ENCODE measurements at regions of chr2 and their contacts with region 1.

Region 1: DNA sequence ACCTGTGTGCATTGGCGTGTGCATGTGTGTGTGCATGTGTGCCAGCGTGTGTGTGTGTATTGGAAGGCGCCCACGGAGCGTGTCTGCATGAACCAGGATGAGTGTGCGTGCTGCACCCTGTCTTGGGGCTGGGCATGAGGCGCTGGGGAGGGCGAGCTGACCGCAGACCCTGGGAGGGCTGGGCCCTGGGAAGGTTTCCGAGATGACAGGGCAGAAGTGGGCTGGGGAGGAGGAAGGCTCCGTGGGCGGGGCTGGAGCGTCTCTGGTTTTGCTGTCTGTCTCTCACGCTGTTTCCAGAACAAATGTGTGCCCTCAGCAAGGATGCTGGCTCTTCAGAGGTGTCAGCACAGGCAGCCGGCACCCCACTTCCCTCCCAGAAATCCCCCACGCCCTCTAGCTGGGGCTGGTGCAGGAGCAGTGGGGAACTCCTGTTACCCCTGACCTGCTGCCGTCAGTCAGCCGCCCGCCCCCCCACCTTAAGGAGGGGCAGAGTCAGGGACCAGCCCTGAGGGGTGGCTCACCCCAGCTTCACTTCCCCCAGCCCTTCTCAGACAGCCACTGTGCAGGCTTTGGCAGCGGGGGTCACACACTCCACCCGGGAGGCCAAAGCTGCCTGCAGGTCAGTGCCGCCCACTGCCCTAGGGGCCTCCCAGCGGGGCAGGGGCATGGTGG is at the start of gene GPR35:
- DNase-seq: peak; percentile 84
- H3K4me3 Mint-ChIP-seq: peak within 1 kb of the TSS; percentile 49
- H3K27ac Mint-ChIP-seq: peak within 1 kb of the TSS; percentile 87
- H3K4me1 Mint-ChIP-seq: peaks cover 59% of the 10 kb centered on the region
- H3K27me3 Mint-ChIP-seq: no peaks in the 10 kb centered on the region
- total RNA-seq, gene GPR35: 5.2 to 5.7 TPM

Region 2: GRCh38 chr2:240560480-240561326 is 64.4 kb before region 1 on chr2:
- CTCF ChIA-PET with region 1: interaction called, 14 read pairs
- POLR2A ChIA-PET with region 1: interaction called, 39 read pairs
- DNase-seq: peak; percentile 100
- H3K4me3 Mint-ChIP-seq: peak overlapping the region; percentile 92
- H3K27ac Mint-ChIP-seq: peak overlapping the region; percentile 87
- H3K4me1 Mint-ChIP-seq: peaks cover 75% of the 10 kb centered on the region
- H3K27me3 Mint-ChIP-seq: no peaks in the 10 kb centered on the region

Region 3: GRCh38 chr2:240566203-240567136 is 58.6 kb before region 1 on chr2:
- CTCF ChIA-PET with region 1: interaction called, 14 read pairs
- POLR2A ChIA-PET with region 1: interaction called, 39 read pairs
- DNase-seq: peak; percentile 97
- H3K4me3 Mint-ChIP-seq: peak overlapping the region; percentile 94
- H3K27ac Mint-ChIP-seq: peak overlapping the region; percentile 97
- H3K4me1 Mint-ChIP-seq: peaks cover 71% of the 10 kb centered on the region
- H3K27me3 Mint-ChIP-seq: no peaks in the 10 kb centered on the region

Region 4: DNA sequence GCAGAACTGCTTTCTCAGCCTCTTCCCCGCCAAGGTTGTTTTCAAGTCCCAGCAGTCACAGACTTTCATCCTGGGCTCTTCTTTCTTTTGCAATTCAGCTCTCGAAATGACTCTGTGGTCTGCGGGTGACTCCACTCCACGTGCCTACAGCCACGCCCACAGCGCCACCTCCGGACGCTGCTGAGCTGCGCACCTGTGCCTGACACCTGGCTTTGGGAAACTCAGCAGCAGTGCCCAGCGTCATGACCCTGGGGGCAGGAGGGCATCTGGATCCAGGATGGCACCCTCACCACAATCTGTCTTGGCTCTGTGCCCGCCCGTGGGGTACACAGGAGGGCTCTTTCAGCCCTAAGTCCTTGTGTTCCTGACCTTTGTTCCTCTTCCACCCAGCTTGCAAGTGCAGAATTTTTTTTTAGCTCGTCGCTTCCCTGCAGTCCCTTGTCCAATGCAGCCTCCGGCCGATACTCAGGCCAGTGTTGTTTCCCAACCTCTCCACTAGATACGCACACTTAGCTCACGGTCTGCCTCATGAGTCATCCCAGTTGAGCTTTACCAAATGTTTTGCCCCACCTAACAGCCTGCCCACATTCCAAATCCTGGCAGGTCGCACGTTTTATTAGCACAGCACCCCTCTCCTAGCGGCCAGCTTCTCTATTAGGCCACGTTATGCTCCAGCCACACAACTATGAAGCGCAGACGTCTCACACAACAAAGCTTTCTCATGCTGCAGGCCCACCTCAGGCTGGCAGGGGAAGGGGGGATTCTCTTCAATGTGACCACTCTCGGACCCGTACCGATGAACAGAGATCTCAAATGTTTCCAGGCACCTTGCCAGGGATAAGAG is 45.1 kb before region 1 on chr2:
- CTCF ChIA-PET with region 1: interaction called, 10 read pairs
- POLR2A ChIA-PET with region 1: interaction called, 50 read pairs
- DNase-seq: peak; percentile 88
- H3K4me3 Mint-ChIP-seq: no peak overlapping the region
- H3K27ac Mint-ChIP-seq: peak overlapping the region; percentile 79
- H3K4me1 Mint-ChIP-seq: peaks cover 51% of the 10 kb centered on the region
- H3K27me3 Mint-ChIP-seq: no peaks in the 10 kb centered on the region

Region 5: DNA sequence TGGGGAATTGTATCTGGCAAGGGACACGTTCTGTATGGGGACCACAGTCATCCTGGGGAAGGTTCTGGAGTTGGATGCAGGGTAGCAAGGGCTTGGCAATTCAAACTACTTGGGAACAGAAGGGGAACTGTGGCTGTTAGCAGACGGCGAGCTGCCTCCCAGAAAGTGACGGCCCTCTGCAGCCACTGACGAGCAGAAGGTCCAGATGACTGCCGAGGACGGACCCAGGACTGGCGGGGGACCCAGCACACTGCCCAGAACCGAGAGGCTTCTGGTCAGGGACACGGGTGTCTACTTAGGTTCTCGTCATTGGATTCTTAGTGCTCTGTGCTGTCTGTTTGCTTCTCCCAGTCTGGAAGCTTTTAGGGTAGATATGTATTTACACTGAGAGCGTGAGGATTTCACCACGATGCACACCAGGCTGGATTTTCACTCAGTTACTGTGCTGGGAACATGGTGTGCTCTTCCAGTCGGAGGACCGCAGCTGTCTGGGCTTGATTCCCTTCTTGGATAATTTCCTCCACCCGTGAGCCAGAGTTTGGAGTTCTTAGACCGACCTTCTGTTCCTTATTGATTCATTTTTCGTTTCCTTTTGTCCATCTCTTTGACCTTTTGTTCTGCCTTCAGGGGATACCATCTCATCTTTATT is 13.6 kb after region 1 on chr2:
- CTCF ChIA-PET with region 1: no interaction called
- POLR2A ChIA-PET with region 1: no interaction called
- DNase-seq: no peak
- H3K4me3 Mint-ChIP-seq: no peak overlapping the region
- H3K27ac Mint-ChIP-seq: no peak overlapping the region
- H3K4me1 Mint-ChIP-seq: no peaks in the 10 kb centered on the region
- H3K27me3 Mint-ChIP-seq: peaks cover 5% of the 10 kb centered on the region

Region 6: GRCh38 chr2:240713071-240713927 is 88.2 kb after region 1 on chr2:
- CTCF ChIA-PET with region 1: no interaction called
- POLR2A ChIA-PET with region 1: no interaction called
- DNase-seq: no peak
- H3K4me3 Mint-ChIP-seq: no peak overlapping the region
- H3K27ac Mint-ChIP-seq: no peak overlapping the region
- H3K4me1 Mint-ChIP-seq: no peaks in the 10 kb centered on the region
- H3K27me3 Mint-ChIP-seq: peaks cover 2% of the 10 kb centered on the region

Measured in activated CD4-positive, alpha-beta memory T cell treated with anti-CD3 and anti-CD28 coated beads, Interleukin-2, amount 10 ng/mL, durations not matched to agents 7 days and 5 days (primary cell).